ENCODE measurements at regions of chr10 and their contacts with region 1.

Region 1: DNA sequence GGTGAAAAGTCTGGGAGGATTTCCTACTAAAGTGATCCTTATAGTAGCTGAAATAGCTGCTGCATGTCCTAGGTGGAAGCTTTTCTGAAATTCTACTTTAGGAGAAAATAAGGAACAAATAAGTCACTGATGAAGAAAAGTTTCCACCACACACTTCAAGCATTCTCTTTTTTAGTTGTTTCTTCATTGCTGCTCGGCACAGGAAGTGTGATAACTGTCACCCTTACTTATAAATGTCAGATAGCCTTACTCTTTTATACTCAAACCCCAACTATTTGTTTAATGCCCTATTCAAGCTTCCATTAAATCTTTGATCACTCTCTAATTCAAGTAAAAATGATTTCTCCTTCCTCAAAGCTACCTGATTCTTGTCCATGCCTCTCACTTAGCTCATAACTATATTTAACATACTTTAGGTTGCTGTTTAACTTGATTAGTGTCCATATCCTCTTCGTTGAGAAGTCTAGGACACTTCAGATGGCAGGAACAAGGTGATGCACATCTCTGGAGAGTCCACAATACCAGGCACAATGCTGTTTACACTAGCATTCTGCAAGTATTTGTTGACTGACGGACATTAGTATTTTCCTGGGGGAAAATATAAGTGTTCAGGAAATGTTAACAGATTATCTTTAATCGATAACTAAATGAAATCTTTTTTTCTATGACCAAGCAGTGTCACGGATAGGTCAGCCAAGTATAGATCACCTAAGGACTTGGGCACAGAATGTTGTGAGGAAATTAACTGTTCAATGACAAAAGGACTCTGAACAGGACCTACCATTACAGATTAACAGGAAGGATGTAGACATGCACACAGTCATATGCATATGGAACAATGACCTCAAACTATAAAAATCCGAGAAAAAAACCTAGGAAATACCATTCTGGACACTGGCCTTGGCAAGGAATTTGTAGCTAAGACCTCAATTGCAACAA is 67.4 kb downstream of the ZNF438 start:
- DNase-seq: peak; percentile 81
- H3K4me3 ChIP-seq: peak overlapping the region in 1 of 3 experiments; percentile 30
- H3K27ac ChIP-seq: peak overlapping the region; percentile 99
- H3K4me1 ChIP-seq: peaks cover 45% of the 10 kb centered on the region
- H3K27me3 ChIP-seq: no peaks in the 10 kb centered on the region
- CTCF ChIP-seq: no peak
- POLR2A ChIP-seq: peak; percentile 32

Region 2: GRCh38 chr10:30812018-30812851 is 152.0 kb before region 1 on chr10:
- CTCF ChIA-PET with region 1: interaction called, 5 read pairs
- POLR2A ChIA-PET with region 1: no interaction called
- dilution Hi-C with region 1: no loop called
- intact Hi-C with region 1: loop called (anchors 2 kb)
- DNase-seq: peak; percentile 96
- H3K4me3 ChIP-seq: no peak overlapping the region
- H3K27ac ChIP-seq: peak overlapping the region; percentile 96
- H3K4me1 ChIP-seq: peaks cover 54% of the 10 kb centered on the region
- H3K27me3 ChIP-seq: no peaks in the 10 kb centered on the region
- CTCF ChIP-seq: no peak
- POLR2A ChIP-seq: peak; percentile 29

Region 3: GRCh38 chr10:30820261-30820991 is 143.8 kb before region 1 on chr10:
- CTCF ChIA-PET with region 1: no interaction called
- POLR2A ChIA-PET with region 1: no interaction called
- dilution Hi-C with region 1: no loop called
- intact Hi-C with region 1: loop called (anchors 1 kb)
- DNase-seq: peak; percentile 98
- H3K4me3 ChIP-seq: no peak overlapping the region
- H3K27ac ChIP-seq: peak overlapping the region; percentile 94
- H3K4me1 ChIP-seq: peaks cover 48% of the 10 kb centered on the region
- H3K27me3 ChIP-seq: no peaks in the 10 kb centered on the region
- CTCF ChIP-seq: no peak
- POLR2A ChIP-seq: peak; percentile 29

Region 4: DNA sequence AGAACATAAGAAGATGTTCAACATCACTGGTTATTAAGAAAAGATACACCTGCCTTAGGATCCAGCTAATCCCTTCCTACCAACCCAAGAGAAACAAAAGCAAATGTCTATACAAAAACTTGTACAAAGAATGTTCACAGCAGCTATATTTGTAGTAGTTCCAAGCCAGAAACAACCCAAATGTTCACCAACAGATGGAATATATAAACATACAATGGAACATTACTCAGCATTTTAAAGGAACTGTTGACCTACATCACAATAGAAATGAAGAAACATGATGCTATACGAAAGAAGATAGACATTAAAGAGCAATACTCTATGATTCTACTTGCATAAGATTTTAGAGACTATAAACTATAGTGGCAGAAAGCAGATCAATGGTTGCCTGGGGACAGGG is 82.0 kb before region 1 on chr10:
- CTCF ChIA-PET with region 1: no interaction called
- POLR2A ChIA-PET with region 1: no interaction called
- dilution Hi-C with region 1: no loop called
- intact Hi-C with region 1: loop called (anchors 5 kb)
- DNase-seq: peak; percentile 48
- H3K4me3 ChIP-seq: no peak overlapping the region
- H3K27ac ChIP-seq: no peak overlapping the region
- H3K4me1 ChIP-seq: peaks cover 28% of the 10 kb centered on the region
- H3K27me3 ChIP-seq: no peaks in the 10 kb centered on the region
- CTCF ChIP-seq: no peak
- POLR2A ChIP-seq: no peak

Region 5: DNA sequence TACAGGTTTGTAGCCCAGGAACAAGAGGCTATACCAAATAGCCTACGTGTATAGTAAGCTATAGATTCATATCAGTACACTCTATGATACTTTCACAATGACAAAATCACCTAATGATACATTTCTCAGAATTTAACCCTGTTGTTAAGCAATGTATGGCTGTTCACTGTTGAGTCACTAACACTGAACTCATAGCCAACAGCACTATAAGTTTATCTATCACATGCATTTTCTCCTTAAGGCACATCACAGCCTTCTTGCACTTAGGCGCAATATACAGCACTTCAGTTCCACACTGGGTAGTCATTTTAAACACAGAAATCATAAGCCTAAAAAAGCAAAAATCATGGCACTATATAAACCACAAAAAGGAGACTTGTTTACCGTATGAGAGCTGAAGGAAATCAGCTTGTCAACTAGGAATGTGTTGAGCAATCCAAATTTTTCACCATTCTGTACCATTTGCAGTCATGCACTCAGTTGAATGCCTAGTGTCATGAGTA is 21.8 kb after region 1 on chr10:
- CTCF ChIA-PET with region 1: interaction called, 5 read pairs
- POLR2A ChIA-PET with region 1: no interaction called
- dilution Hi-C with region 1: no loop called
- intact Hi-C with region 1: loop called (anchors 1 kb)
- DNase-seq: peak; percentile 69
- H3K4me3 ChIP-seq: no peak overlapping the region
- H3K27ac ChIP-seq: peak overlapping the region; percentile 93
- H3K4me1 ChIP-seq: peaks cover 56% of the 10 kb centered on the region
- H3K27me3 ChIP-seq: no peaks in the 10 kb centered on the region
- CTCF ChIP-seq: no peak
- POLR2A ChIP-seq: no peak

Region 6: DNA sequence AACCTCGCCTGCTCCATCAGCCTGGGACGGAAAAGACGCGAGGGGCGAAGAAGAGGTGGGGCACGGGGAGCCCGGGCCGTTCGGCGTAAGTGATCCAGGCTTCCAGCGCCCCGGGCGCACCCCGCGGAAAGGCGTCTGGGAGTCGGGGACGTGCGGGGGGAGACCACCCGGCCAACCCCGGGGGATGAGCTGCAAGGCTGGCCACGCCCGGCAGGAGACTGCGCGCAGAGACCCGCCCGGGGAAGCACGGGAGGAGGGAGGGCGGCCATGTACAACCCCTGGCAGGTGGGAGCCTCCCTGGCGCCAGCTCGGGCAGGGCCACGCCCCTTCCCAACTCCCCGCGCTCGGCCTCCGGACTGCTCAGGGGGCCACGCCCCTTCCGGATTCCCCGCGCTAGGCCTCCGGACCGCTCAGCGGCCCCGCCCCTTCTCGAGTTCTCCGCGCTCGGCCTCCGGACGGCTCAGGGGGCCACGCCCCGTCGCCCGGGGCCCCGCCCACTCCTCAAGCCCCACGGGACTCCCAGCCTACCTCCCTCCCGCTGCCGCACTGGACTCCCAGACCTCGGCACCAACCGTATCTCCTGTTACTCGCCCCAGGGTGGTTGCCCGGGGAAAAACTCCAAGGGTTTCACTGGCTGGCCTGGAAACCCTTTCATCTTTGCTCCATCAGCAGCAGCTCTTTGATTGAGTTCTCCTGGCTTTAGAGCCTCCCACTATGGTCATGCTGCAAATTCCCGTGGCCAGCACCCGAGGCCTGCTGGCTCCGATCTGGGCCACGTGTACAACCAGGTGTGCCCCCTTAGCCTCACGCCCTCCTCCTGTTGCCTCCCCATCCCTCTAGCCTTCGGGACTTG is 639.2 kb after region 1 on chr10:
- CTCF ChIA-PET with region 1: no interaction called
- POLR2A ChIA-PET with region 1: no interaction called
- dilution Hi-C with region 1: no loop called
- intact Hi-C with region 1: no loop called
- DNase-seq: peak; percentile 92
- H3K4me3 ChIP-seq: peak overlapping the region; percentile 67 to 93 (median 79)
- H3K27ac ChIP-seq: peak overlapping the region; percentile 38
- H3K4me1 ChIP-seq: peaks cover 5% of the 10 kb centered on the region
- H3K27me3 ChIP-seq: peaks cover 8 to 13% of the 10 kb centered on the region in 2 experiments
- CTCF ChIP-seq: no peak
- POLR2A ChIP-seq: peak; percentile 41

Region 7: GRCh38 chr10:31728698-31729224 is 764.5 kb after region 1 on chr10:
- CTCF ChIA-PET with region 1: no interaction called
- POLR2A ChIA-PET with region 1: no interaction called
- dilution Hi-C with region 1: no loop called
- intact Hi-C with region 1: no loop called
- DNase-seq: no peak
- H3K4me3 ChIP-seq: no peak overlapping the region
- H3K27ac ChIP-seq: no peak overlapping the region
- H3K4me1 ChIP-seq: no peaks in the 10 kb centered on the region
- H3K27me3 ChIP-seq: peaks cover 16 to 23% of the 10 kb centered on the region in 2 experiments
- CTCF ChIP-seq: no peak
- POLR2A ChIP-seq: no peak

Region 8: DNA sequence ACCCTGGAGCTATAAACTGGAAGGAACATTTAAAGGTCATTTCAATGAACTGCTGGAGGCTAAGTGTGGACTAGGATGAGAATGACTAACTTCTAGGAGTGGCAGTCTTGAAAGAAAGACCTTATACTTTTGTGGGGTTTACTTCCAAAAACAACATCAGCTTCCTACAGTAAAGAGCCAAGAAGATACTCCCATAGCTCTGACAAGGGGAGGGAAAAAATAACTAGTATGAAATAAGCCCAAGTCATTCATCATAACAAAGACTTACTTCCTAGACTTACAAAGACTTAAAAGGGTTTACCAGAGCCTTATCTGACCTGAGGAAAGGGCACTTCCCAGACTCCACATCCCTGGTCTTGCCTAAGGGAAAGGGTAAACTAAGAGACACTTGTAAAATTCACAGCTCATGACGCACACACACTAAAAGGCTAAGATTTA is 932.7 kb after region 1 on chr10:
- CTCF ChIA-PET with region 1: no interaction called
- POLR2A ChIA-PET with region 1: no interaction called
- dilution Hi-C with region 1: no loop called
- intact Hi-C with region 1: no loop called
- DNase-seq: peak; percentile 87
- H3K4me3 ChIP-seq: no peak overlapping the region
- H3K27ac ChIP-seq: peak overlapping the region; percentile 62
- H3K4me1 ChIP-seq: peaks cover 21% of the 10 kb centered on the region
- H3K27me3 ChIP-seq: no peaks in the 10 kb centered on the region
- CTCF ChIP-seq: no peak
- POLR2A ChIP-seq: no peak

Measured in endothelial cell of umbilical vein (primary cell).